ENCODE measurements at regions of chr7 and their contacts with region 1.

Region 1: GRCh38 chr7:100428967-100429636 is 529 bp upstream of the MEPCE start:
- DNase-seq: peak; percentile 100
- ATAC-seq: peak; percentile 76
- H3K4me3 ChIP-seq: peak overlapping the region; percentile 88
- H3K4me3 Mint-ChIP-seq: peak overlapping the region; percentile 93 to 100 (median 97)
- H3K27ac ChIP-seq: peak overlapping the region; percentile 97
- H3K27ac Mint-ChIP-seq: peak overlapping the region; percentile 99 to 100 (median 100)
- H3K4me1 ChIP-seq: peaks cover 22 to 29% of the 10 kb centered on the region in 2 donors
- H3K4me1 Mint-ChIP-seq: peaks cover 22 to 56% (median 42%) of the 10 kb centered on the region in 7 donors
- H3K27me3 ChIP-seq: no peaks in the 10 kb centered on the region
- H3K27me3 Mint-ChIP-seq: peaks cover 0 to 24% (median 0%) of the 10 kb centered on the region in 5 donors

Region 2: DNA sequence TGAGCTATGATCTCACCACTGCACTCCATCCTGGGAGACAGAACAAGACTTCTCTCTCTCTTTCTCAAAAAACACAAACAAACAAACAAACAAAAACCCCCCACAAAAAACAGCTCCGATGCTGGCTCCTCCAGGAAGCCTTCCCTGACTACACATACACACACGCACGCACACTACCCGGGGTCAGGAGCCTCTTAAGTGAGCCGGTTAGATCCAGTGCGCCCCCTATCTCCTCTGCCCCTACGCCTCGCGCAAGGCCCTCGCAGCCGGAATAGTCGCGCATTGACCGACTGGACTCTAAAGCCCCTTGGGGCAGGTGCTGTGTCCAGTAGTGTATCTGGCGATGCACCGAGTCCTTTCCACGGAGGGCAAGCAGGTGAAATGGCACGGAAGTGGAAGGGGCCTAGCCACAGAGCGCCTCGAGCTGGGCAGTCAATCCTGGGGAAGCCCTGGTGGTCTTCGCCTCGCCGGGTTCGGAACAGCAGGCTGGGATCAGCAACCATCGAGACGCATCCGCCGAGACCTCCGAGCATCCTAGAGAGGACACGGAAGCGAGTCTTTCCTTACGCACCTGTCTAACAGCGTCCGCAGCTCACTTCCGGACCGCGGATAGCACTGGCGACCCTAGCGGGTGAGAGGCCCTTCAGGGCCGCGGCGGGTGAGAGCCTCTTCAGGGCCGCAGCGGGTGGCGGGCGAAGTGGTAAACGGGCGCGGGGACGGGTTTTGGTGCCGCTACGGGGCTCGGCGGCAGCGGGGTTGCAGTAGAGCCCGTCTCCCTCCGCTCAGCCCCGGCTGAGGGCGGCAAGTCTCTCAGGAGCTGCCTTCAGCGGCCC is 812.5 kb before region 1 on chr7 and contains the start of gene ZSCAN25:
- CTCF ChIA-PET with region 1: no interaction called
- POLR2A ChIA-PET with region 1: no interaction called
- intact Hi-C with region 1: loop called in 1 of 2 experiments (anchors 2 kb)
- DNase-seq: peak; percentile 65 to 88 (median 85)
- ATAC-seq: peak; percentile 99
- H3K4me3 ChIP-seq: peak within 1 kb of the TSS; percentile 83
- H3K4me3 Mint-ChIP-seq: peak within 1 kb of the TSS; percentile 94 to 99 (median 98)
- H3K27ac ChIP-seq: peak within 1 kb of the TSS; percentile 90
- H3K27ac Mint-ChIP-seq: peak within 1 kb of the TSS; percentile 88 to 99 (median 97)
- H3K4me1 ChIP-seq: peaks cover 12 to 14% of the 10 kb centered on the region in 2 donors
- H3K4me1 Mint-ChIP-seq: peaks cover 30 to 55% (median 48%) of the 10 kb centered on the region in 7 donors
- H3K27me3 ChIP-seq: no peaks in the 10 kb centered on the region
- H3K27me3 Mint-ChIP-seq: peaks cover 0 to 4% (median 0%) of the 10 kb centered on the region in 5 donors
- total RNA-seq, gene ZSCAN25: 33.9 to 51.6 (median 43.8) TPM

Region 3: GRCh38 chr7:100126931-100127865 is 301.9 kb before region 1 on chr7 and contains the start of gene MBLAC1:
- CTCF ChIA-PET with region 1: no interaction called
- POLR2A ChIA-PET with region 1: interaction called, 10 read pairs
- intact Hi-C with region 1: loop called (anchors 1 to 2 kb)
- DNase-seq: peak; percentile 80 to 95 (median 91)
- ATAC-seq: peak; percentile 95
- H3K4me3 ChIP-seq: peak within 1 kb of the TSS; percentile 99
- H3K4me3 Mint-ChIP-seq: peak within 1 kb of the TSS; percentile 95 to 100 (median 98)
- H3K27ac ChIP-seq: peak within 1 kb of the TSS; percentile 98
- H3K27ac Mint-ChIP-seq: peak within 1 kb of the TSS; percentile 98 to 100 (median 99)
- H3K4me1 ChIP-seq: peaks cover 20 to 25% of the 10 kb centered on the region in 2 donors
- H3K4me1 Mint-ChIP-seq: peaks cover 13 to 46% (median 26%) of the 10 kb centered on the region in 7 donors
- H3K27me3 ChIP-seq: no peaks in the 10 kb centered on the region
- H3K27me3 Mint-ChIP-seq: no peaks in the 10 kb centered on the region
- total RNA-seq, gene MBLAC1: 4.5 to 6.3 (median 5.8) TPM

Region 4: DNA sequence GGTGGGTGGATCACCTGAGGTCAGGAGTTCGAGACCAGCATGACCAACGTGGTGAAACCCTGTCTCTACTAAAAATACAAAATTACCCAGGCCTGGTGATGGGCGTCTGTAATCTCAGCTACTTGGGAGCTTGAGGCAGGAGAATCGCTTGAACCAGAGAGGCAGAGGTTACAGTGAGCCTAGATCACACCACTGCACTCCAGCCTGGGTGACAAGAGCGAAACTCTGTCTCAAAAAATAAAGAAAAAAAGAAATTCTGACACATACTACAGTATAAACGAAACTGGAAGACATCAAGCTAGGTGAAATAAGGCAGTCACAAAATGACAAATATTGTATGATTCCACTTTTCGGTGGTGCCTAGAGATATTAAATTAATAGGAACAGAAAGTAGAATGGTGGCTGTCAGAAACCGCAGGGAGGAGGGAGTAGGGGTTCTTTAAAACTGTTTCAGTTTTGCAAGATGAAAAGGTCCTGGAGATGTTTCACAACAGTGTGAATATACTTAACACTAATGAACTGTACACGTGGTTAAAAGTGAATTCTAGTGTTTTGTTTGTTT is 32.6 kb before region 1 on chr7:
- CTCF ChIA-PET with region 1: no interaction called
- POLR2A ChIA-PET with region 1: interaction called, 4 read pairs
- intact Hi-C with region 1: loop called in 1 of 2 experiments (anchors 2 kb)
- DNase-seq: peak in 8 of 9 donors; percentile 19 to 54 (median 48)
- ATAC-seq: peak; percentile 95
- H3K4me3 ChIP-seq: no peak overlapping the region
- H3K4me3 Mint-ChIP-seq: peak overlapping the region; percentile 59 to 80 (median 72)
- H3K27ac ChIP-seq: peak overlapping the region; percentile 29
- H3K27ac Mint-ChIP-seq: peak overlapping the region; percentile 63 to 92 (median 83)
- H3K4me1 ChIP-seq: peaks cover 6 to 9% of the 10 kb centered on the region in 2 donors
- H3K4me1 Mint-ChIP-seq: peaks cover 19 to 28% (median 22%) of the 10 kb centered on the region in 7 donors
- H3K27me3 ChIP-seq: no peaks in the 10 kb centered on the region
- H3K27me3 Mint-ChIP-seq: peaks cover 0 to 51% (median 0%) of the 10 kb centered on the region in 5 donors

Region 5: GRCh38 chr7:100586266-100587025 is 157.3 kb after region 1 on chr7 and contains the start of gene FBXO24:
- CTCF ChIA-PET with region 1: interaction called, 5 read pairs
- POLR2A ChIA-PET with region 1: interaction called, 54 read pairs
- intact Hi-C with region 1: loop called (anchors 1 kb)
- DNase-seq: peak; percentile 91 to 100 (median 99)
- ATAC-seq: peak; percentile 91
- H3K4me3 ChIP-seq: peak within 1 kb of the TSS; percentile 94
- H3K4me3 Mint-ChIP-seq: peak within 1 kb of the TSS; percentile 95 to 100 (median 99)
- H3K27ac ChIP-seq: peak within 1 kb of the TSS; percentile 90
- H3K27ac Mint-ChIP-seq: peak within 1 kb of the TSS in 8 of 9 donors; percentile 94 to 99 (median 98)
- H3K4me1 ChIP-seq: peaks cover 22 to 28% of the 10 kb centered on the region in 2 donors
- H3K4me1 Mint-ChIP-seq: peaks cover 20 to 42% (median 30%) of the 10 kb centered on the region in 7 donors
- H3K27me3 ChIP-seq: no peaks in the 10 kb centered on the region
- H3K27me3 Mint-ChIP-seq: peaks cover 0 to 22% (median 4%) of the 10 kb centered on the region in 5 donors
- total RNA-seq, gene FBXO24: 0.75 to 3.1 (median 1.7) TPM

Region 6: GRCh38 chr7:100852048-100852872 is 423.2 kb after region 1 on chr7 and contains the start of gene SLC12A9:
- CTCF ChIA-PET with region 1: no interaction called
- POLR2A ChIA-PET with region 1: interaction called, 4 read pairs
- intact Hi-C with region 1: loop called in 1 of 2 experiments (anchors 1 kb)
- DNase-seq: peak; percentile 71 to 90 (median 85)
- ATAC-seq: peak; percentile 96
- H3K4me3 ChIP-seq: peak within 1 kb of the TSS; percentile 73
- H3K4me3 Mint-ChIP-seq: peak within 1 kb of the TSS; percentile 89 to 95 (median 92)
- H3K27ac ChIP-seq: peak within 1 kb of the TSS; percentile 76
- H3K27ac Mint-ChIP-seq: peak within 1 kb of the TSS; percentile 71 to 97 (median 90)
- H3K4me1 ChIP-seq: peaks cover 8 to 16% of the 10 kb centered on the region in 2 donors
- H3K4me1 Mint-ChIP-seq: peaks cover 0 to 31% (median 19%) of the 10 kb centered on the region in 7 donors
- H3K27me3 ChIP-seq: no peaks in the 10 kb centered on the region
- H3K27me3 Mint-ChIP-seq: no peaks in the 10 kb centered on the region
- total RNA-seq, gene SLC12A9: 50.4 to 78.6 (median 62.7) TPM

Region 7: DNA sequence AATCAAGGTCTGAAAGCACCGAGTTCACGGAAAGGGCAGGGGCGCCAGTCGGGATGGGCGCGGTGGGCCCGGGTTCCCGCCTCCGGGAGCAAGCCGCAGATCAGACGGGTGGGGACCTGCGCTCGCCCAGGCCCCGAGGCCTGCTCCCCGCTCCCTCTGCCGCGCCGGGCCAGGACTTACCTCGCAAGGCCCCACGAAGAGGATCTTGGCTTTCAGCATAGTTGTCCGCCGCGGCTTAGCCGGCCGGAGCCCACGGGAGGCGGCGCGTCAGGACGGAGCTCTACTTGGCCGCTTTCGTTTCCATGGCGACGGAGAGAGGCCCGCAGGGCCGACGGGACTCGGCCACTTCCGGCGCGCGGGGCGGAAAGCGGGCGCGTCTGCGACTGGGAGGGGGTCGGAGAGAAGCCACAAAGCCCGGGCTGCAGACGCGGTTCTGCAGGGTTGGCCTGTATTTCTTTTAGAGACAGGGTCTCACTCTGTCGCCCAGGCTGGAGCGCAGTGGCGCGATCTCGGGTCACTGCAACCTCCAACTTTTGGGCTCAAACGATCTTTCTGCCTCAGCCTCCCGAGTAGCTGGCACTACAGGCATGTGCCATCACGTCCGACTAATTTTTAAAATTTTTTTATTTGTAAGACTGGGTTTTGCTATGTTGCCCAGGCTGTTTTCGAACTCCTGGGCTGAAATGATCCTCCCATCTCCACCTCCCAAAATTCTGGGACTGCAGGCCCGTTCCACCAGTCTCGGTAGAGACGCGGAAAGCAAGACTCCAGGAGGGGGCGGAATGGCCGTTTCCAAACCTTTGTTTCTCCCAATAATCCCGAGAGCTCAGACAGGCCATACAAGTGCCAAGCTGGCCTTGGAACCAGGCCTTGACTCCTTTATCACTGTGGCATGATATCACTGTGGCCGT is 892.6 kb after region 1 on chr7 and contains the start of gene IFT22:
- CTCF ChIA-PET with region 1: no interaction called
- POLR2A ChIA-PET with region 1: no interaction called
- intact Hi-C with region 1: loop called in 1 of 2 experiments (anchors 10 kb)
- DNase-seq: peak; percentile 68 to 87 (median 79)
- ATAC-seq: peak; percentile 95
- H3K4me3 ChIP-seq: peak within 1 kb of the TSS; percentile 74
- H3K4me3 Mint-ChIP-seq: peak within 1 kb of the TSS; percentile 86 to 94 (median 91)
- H3K27ac ChIP-seq: peak within 1 kb of the TSS; percentile 70
- H3K27ac Mint-ChIP-seq: peak within 1 kb of the TSS; percentile 82 to 94 (median 90)
- H3K4me1 ChIP-seq: peaks cover 7 to 12% of the 10 kb centered on the region in 2 donors
- H3K4me1 Mint-ChIP-seq: peaks cover 0 to 19% (median 9%) of the 10 kb centered on the region in 7 donors
- H3K27me3 ChIP-seq: no peaks in the 10 kb centered on the region
- H3K27me3 Mint-ChIP-seq: peaks cover 0 to 7% (median 0%) of the 10 kb centered on the region in 5 donors
- total RNA-seq, gene IFT22: 3.7 to 7.4 (median 4.8) TPM